Colonic mucosa (tissue), 4 donors: ENCODE measurements at regions of chr9 and their contacts with region 1.

Region 1: DNA sequence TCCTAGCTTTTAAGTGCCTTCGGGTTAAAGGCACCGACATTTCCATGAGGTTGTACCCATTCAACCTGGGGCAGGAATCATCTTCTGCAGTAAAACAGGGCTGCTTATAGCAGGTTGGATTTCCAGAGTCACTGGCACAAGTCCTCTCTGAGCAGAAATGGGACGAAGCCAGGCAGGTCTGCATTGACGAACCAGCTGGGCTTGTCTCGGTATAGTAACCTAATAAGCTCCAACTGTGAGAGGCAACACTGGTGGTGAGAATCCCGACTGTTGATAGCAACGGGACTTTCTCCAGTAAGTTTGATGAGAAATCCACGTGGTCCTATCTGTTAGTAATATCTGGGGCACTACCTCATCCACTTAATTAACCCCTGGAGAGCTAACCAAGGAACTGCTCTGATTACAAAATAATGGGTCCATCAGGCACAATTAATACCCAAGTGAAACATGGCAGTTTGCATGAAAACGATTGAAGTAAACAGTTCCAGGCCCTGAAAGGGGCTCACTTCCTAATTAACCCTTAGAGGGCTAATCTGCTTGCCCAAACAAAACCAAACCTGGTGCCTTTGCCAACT is 491.0 kb upstream of the C9orf72 start:
- DNase-seq: no peak
- H3K4me3 ChIP-seq: no peak overlapping the region
- H3K27ac ChIP-seq: no peak overlapping the region
- H3K4me1 ChIP-seq: no peaks in the 10 kb centered on the region
- H3K27me3 ChIP-seq: no peaks in the 10 kb centered on the region
- CTCF ChIP-seq: no peak

Region 2: DNA sequence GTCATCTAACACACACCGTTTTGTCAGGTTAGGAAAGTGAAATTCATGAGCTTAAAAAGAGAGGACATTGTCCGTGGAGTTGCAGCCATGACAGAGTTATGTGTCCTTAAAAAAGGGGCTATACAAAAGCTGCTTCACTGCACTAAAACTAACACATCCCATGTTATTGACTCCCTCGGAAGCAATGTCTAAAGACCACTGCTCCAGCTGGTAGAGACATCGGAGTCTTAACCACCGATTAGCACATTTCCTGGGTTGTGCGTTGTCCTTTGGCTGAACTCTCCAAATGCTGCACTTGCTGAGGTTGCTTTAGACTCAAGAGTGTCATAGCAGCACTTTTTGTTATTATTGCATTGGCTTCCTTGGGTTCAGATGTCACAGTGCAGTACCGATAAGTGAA is 362.7 kb before region 1 on chr9:
- intact Hi-C with region 1: no loop called
- DNase-seq: no peak
- H3K4me3 ChIP-seq: no peak overlapping the region
- H3K27ac ChIP-seq: no peak overlapping the region
- H3K4me1 ChIP-seq: no peaks in the 10 kb centered on the region
- H3K27me3 ChIP-seq: no peaks in the 10 kb centered on the region
- CTCF ChIP-seq: no peak

Region 3: DNA sequence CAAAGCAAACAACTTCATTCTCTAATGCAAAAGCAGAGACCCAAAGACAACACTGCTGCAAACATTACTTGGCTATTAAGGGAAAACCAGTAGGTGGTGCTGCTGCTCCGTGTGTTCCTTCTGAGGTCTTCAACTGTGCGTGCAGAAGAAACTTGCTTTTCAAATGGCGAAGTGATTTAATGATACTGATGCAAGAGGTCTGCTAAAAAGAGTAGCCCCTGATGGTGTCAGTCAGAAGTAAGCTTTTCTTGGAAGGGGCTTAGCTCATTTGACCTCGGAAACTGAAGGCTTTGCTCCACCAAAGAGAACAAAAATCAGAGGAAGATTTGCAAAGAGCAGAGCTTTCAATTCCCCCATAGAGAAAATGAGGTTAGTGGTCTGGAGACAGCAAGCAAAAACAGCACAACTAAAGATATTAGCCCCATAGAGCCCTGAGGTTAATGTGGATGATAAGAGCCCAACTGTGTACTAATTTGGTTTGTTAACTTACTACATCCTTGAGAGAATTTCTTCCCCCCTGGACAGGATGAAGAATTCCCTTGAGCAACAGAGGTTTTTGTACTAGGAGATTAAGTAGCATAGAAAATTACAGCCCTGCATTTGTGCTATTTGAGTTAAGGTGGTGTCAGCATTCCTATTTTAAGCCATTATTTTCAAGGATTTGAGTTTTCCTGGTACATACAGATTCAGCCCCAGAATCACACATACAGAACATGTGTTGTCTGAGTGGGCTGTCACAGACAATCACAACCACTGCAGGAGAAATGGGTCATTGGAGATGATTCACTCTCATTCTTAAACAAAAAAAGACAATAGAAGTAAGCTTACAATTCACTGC is 337.9 kb before region 1 on chr9:
- intact Hi-C with region 1: loop called (anchors 10 kb)
- DNase-seq: peak; percentile 63
- H3K4me3 ChIP-seq: no peak overlapping the region
- H3K27ac ChIP-seq: no peak overlapping the region
- H3K4me1 ChIP-seq: no peaks in the 10 kb centered on the region
- H3K27me3 ChIP-seq: no peaks in the 10 kb centered on the region
- CTCF ChIP-seq: peak; percentile 79

Region 4: DNA sequence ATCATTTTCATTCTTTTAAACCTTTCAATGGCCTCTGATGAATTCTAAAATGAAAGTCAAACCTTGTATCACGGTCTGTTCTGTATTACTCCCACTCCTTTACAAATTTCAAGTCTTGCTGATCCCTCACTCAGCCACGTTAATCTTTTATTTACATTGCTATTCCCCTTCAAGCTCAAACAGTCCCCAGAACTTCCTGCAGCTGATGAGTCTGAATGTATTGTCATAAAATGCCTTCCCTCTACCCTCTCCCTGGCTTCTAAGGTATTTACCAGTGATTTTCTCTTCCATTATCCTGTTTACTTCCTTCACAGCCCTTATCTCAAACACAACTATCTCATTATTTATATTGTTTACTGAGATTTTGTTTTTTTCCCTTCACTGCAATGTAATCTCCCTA is 71.2 kb after region 1 on chr9:
- intact Hi-C with region 1: no loop called
- DNase-seq: no peak
- H3K4me3 ChIP-seq: no peak overlapping the region
- H3K27ac ChIP-seq: no peak overlapping the region
- H3K4me1 ChIP-seq: no peaks in the 10 kb centered on the region
- H3K27me3 ChIP-seq: no peaks in the 10 kb centered on the region
- CTCF ChIP-seq: no peak

Region 5: GRCh38 chr9:28177925-28178324 is 113.6 kb after region 1 on chr9:
- intact Hi-C with region 1: no loop called
- DNase-seq: no peak
- H3K4me3 ChIP-seq: no peak overlapping the region
- H3K27ac ChIP-seq: no peak overlapping the region
- H3K4me1 ChIP-seq: no peaks in the 10 kb centered on the region
- H3K27me3 ChIP-seq: no peaks in the 10 kb centered on the region
- CTCF ChIP-seq: no peak